ENCODE measurements at regions of chr7 and their contacts with region 1.

Region 1: GRCh38 chr7:82810558-82811259 is 352.0 kb downstream of the PCLO start:
- DNase-seq: peak; percentile 70
- H3K4me3 ChIP-seq: no peak overlapping the region
- H3K27ac ChIP-seq: no peak overlapping the region
- H3K4me1 ChIP-seq: peaks cover 4% of the 10 kb centered on the region
- H3K27me3 ChIP-seq: no peaks in the 10 kb centered on the region
- CTCF ChIP-seq: peak; percentile 42 to 54
- POLR2A ChIP-seq: no peak

Region 2: DNA sequence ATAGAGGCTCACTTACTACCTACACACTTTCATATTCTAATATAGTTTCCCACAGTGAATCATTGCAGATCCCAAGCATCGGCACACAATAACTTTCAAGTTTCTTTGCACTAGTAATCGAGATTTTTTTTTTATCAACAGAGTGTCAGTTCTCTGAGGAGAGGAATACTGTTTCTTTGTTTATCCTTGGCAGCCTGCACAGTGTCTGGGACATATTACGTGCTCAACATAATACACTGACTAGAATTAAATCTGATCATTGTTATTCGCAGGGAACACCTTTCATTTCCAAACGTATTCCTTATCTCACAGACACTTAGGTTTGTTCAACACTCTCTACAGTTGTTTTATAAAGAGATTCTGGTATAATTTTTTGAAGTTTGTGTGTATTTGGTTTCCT is 462.5 kb before region 1 on chr7:
- CTCF ChIA-PET with region 1: no interaction called
- POLR2A ChIA-PET with region 1: no interaction called
- dilution Hi-C with region 1: no loop called
- intact Hi-C with region 1: no loop called
- DNase-seq: no peak
- H3K4me3 ChIP-seq: no peak overlapping the region
- H3K27ac ChIP-seq: no peak overlapping the region
- H3K4me1 ChIP-seq: no peaks in the 10 kb centered on the region
- H3K27me3 ChIP-seq: no peaks in the 10 kb centered on the region
- CTCF ChIP-seq: no peak
- POLR2A ChIP-seq: no peak

Region 3: GRCh38 chr7:82859106-82859850 is 48.6 kb after region 1 on chr7:
- CTCF ChIA-PET with region 1: interaction called, 9 read pairs
- POLR2A ChIA-PET with region 1: no interaction called
- dilution Hi-C with region 1: no loop called
- intact Hi-C with region 1: loop called (anchors 1 kb)
- DNase-seq: peak; percentile 65
- H3K4me3 ChIP-seq: no peak overlapping the region
- H3K27ac ChIP-seq: peak overlapping the region; percentile 98
- H3K4me1 ChIP-seq: peaks cover 18% of the 10 kb centered on the region
- H3K27me3 ChIP-seq: no peaks in the 10 kb centered on the region
- CTCF ChIP-seq: no peak
- POLR2A ChIP-seq: no peak

Region 4: GRCh38 chr7:83072576-83073517 is 262.1 kb after region 1 on chr7:
- CTCF ChIA-PET with region 1: interaction called, 36 read pairs
- POLR2A ChIA-PET with region 1: no interaction called
- dilution Hi-C with region 1: no loop called
- intact Hi-C with region 1: loop called (anchors 5 kb)
- DNase-seq: no peak
- H3K4me3 ChIP-seq: no peak overlapping the region
- H3K27ac ChIP-seq: no peak overlapping the region
- H3K4me1 ChIP-seq: no peaks in the 10 kb centered on the region
- H3K27me3 ChIP-seq: no peaks in the 10 kb centered on the region
- CTCF ChIP-seq: no peak
- POLR2A ChIP-seq: no peak

Region 5: DNA sequence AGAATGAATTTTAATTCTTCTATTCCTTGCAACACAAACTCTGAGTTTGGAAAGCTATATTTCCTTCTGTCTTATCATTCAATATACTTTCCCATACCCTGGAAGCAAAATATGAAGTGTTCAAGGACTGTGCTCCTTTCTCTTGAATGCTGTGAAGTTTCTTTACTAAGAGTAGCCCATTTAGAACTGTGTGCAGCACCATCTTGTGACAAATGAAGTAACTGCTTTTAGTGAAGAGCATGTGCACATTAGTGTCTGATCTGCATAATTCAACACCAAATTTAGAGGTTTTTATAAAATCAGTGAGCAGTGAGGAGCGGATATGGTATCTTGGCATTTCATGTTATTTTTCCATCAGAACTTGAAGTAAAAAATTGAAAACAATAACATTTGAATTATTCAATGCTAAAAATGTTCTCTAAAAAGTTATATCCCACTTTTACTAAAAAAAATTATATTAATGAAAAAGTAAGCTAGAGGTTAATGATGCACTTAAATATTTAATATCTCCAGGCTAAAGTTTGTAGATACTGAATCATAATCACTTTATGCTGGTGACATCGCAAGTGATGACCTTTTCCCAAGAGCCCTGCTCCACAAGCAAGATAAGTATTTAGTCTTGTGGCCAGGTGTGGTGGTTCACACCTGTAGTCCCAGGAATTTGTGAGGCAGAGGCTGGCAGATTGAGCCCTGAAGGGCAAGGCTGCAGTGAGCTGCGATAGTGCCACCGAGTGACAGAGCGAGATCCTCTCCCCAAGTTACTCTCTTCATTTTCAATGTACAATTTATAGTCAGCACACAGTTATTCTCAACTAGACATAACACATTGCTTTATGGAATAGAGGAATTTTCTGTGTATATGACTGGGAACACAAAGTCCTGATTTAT is 460.7 kb after region 1 on chr7:
- CTCF ChIA-PET with region 1: interaction called, 46 read pairs
- POLR2A ChIA-PET with region 1: no interaction called
- dilution Hi-C with region 1: no loop called
- intact Hi-C with region 1: loop called (anchors 1 kb)
- DNase-seq: peak; percentile 55
- H3K4me3 ChIP-seq: no peak overlapping the region
- H3K27ac ChIP-seq: no peak overlapping the region
- H3K4me1 ChIP-seq: no peaks in the 10 kb centered on the region
- H3K27me3 ChIP-seq: no peaks in the 10 kb centered on the region
- CTCF ChIP-seq: peak in 1 of 2 donors; percentile 23
- POLR2A ChIP-seq: no peak

Measured in endothelial cell of umbilical vein (primary cell).